Endothelial cell of umbilical vein (primary cell): ENCODE measurements at regions of chr22 and their contacts with region 1.

Region 1: DNA sequence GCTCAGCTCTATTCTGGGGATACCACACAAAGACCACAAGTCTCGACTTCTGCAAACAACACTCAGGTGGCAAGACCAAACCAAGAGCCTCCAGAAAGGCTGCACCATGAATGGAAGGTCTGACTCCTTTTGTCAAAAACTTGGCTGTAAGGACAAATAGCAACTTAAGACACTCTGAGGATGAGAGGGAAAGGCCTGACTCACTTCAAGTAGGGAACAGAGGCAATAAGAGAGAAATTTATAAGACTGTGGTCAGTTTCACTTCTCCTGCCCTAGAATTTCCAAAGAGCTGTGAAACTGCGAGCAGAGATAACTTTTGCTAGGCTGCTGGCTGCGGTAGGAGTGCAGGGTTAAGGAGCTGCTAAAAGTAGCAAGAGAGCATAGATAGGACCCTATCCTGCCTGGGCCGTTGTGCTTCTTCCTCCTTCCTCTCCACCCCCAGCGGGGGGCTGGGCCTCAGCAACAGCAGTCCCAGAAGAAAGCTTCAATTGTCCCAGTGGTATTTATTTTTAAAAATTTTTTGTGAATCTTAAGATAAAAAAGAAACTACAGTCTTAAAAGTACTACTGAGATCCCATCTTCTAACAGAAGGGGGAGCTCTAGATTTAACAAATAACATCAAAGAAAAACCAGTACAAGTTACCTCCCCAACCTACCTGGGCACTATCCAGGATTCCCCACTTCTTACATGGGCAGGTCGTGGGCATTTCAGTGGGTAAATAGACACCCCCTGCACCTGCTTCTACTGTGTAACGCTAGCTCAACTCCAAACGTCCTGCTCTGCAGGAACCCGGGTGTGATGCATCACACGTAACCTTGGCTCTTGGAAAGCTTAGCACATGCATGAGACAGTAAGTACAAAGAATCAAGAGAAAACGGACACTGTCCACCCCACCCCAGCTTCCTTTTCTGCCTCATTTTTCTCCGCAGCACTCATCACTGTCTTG is 66.4 kb downstream of the SGSM3 start:
- DNase-seq: peak; percentile 70
- H3K4me3 ChIP-seq: no peak overlapping the region
- H3K27ac ChIP-seq: no peak overlapping the region
- H3K4me1 ChIP-seq: peaks cover 2% of the 10 kb centered on the region
- H3K27me3 ChIP-seq: no peaks in the 10 kb centered on the region
- CTCF ChIP-seq: peak in 1 of 2 donors; percentile 52
- POLR2A ChIP-seq: no peak

Region 2: GRCh38 chr22:40348025-40348658 is 88.6 kb before region 1 on chr22:
- CTCF ChIA-PET with region 1: no interaction called
- POLR2A ChIA-PET with region 1: no interaction called
- dilution Hi-C with region 1: no loop called
- intact Hi-C with region 1: no loop called
- DNase-seq: peak; percentile 65
- H3K4me3 ChIP-seq: peak overlapping the region in 1 of 3 experiments; percentile 90
- H3K27ac ChIP-seq: no peak overlapping the region
- H3K4me1 ChIP-seq: peaks cover 16% of the 10 kb centered on the region
- H3K27me3 ChIP-seq: no peaks in the 10 kb centered on the region
- CTCF ChIP-seq: peak; percentile 75 to 78
- POLR2A ChIP-seq: no peak

Region 3: GRCh38 chr22:40463017-40463631 is 26.3 kb after region 1 on chr22:
- CTCF ChIA-PET with region 1: interaction called, 11 read pairs
- POLR2A ChIA-PET with region 1: no interaction called
- dilution Hi-C with region 1: no loop called
- intact Hi-C with region 1: no loop called
- DNase-seq: no peak
- H3K4me3 ChIP-seq: no peak overlapping the region
- H3K27ac ChIP-seq: no peak overlapping the region
- H3K4me1 ChIP-seq: peaks cover 5% of the 10 kb centered on the region
- H3K27me3 ChIP-seq: no peaks in the 10 kb centered on the region
- CTCF ChIP-seq: no peak
- POLR2A ChIP-seq: no peak

Region 4: DNA sequence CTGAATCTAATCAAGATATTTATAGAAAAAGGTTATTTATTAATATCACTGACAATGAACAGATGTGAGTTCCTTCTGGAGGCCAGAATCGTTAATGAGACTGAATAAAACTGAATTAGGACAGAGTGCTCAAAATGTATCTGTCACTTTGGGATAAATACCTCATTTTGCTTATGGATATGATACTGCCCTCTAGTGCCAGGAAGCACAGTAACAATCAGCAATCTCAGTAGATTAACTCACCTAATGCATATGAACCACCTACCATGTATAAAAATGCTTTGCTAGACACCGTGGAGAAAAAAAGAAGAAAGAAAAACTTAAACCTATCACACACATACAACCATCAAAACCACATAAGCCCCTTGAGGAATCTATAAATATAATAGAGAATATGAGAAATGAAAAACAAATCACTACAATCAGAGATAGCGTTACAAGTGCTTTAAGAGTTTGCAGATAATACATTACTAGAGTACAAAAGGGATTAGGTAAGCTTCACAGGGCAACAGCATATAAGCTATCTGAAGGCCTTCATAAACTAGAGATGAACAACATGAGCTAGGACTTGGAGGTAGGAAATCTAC is 51.0 kb after region 1 on chr22:
- CTCF ChIA-PET with region 1: interaction called, 41 read pairs
- POLR2A ChIA-PET with region 1: no interaction called
- dilution Hi-C with region 1: no loop called
- intact Hi-C with region 1: loop called (anchors 1 kb)
- DNase-seq: peak; percentile 49
- H3K4me3 ChIP-seq: no peak overlapping the region
- H3K27ac ChIP-seq: no peak overlapping the region
- H3K4me1 ChIP-seq: peaks cover 6% of the 10 kb centered on the region
- H3K27me3 ChIP-seq: no peaks in the 10 kb centered on the region
- CTCF ChIP-seq: peak; percentile 54 to 58
- POLR2A ChIP-seq: no peak

Region 5: GRCh38 chr22:40636380-40637182 is 199.8 kb after region 1 on chr22 and contains the start of gene MRTFA:
- CTCF ChIA-PET with region 1: interaction called, 11 read pairs
- POLR2A ChIA-PET with region 1: interaction called, 4 read pairs
- dilution Hi-C with region 1: no loop called
- intact Hi-C with region 1: no loop called
- DNase-seq: peak; percentile 100
- H3K4me3 ChIP-seq: peak within 1 kb of the TSS; percentile 72 to 88 (median 87)
- H3K27ac ChIP-seq: peak within 1 kb of the TSS; percentile 69
- H3K4me1 ChIP-seq: peaks cover 21% of the 10 kb centered on the region
- H3K27me3 ChIP-seq: no peaks in the 10 kb centered on the region
- CTCF ChIP-seq: no peak
- POLR2A ChIP-seq: peak; percentile 81
- total RNA-seq, gene MRTFA: 44.1 and 48.6 TPM in 2 replicates

Region 6: GRCh38 chr22:40651563-40652501 is 215.1 kb after region 1 on chr22:
- CTCF ChIA-PET with region 1: interaction called, 111 read pairs
- POLR2A ChIA-PET with region 1: no interaction called
- dilution Hi-C with region 1: no loop called
- intact Hi-C with region 1: no loop called
- DNase-seq: peak; percentile 98
- H3K4me3 ChIP-seq: peak overlapping the region in 2 of 3 experiments; percentile 49 to 64
- H3K27ac ChIP-seq: peak overlapping the region; percentile 88
- H3K4me1 ChIP-seq: peaks cover 14% of the 10 kb centered on the region
- H3K27me3 ChIP-seq: no peaks in the 10 kb centered on the region
- CTCF ChIP-seq: peak in 1 of 2 donors; percentile 6
- POLR2A ChIP-seq: peak; percentile 91

Region 7: GRCh38 chr22:40898850-40899357 is 462.1 kb after region 1 on chr22:
- CTCF ChIA-PET with region 1: interaction called, 40 read pairs
- POLR2A ChIA-PET with region 1: no interaction called
- dilution Hi-C with region 1: no loop called
- intact Hi-C with region 1: no loop called
- DNase-seq: peak; percentile 55
- H3K4me3 ChIP-seq: no peak overlapping the region
- H3K27ac ChIP-seq: no peak overlapping the region
- H3K4me1 ChIP-seq: no peaks in the 10 kb centered on the region
- H3K27me3 ChIP-seq: no peaks in the 10 kb centered on the region
- CTCF ChIP-seq: peak; percentile 33 to 44
- POLR2A ChIP-seq: no peak